GM10248 (cell line): ENCODE measurements at regions of chr3 and their contacts with region 1.

Region 1: GRCh38 chr3:49411968-49412631 is at the starts of genes RHOA and TCTA:
- DNase-seq: peak; percentile 99
- CTCF ChIP-seq: no peak

Region 2: GRCh38 chr3:49422379-49423248 is 10.5 kb after region 1 on chr3 and contains the start of gene AMT:
- CTCF ChIA-PET with region 1: interaction called, 11 read pairs
- POLR2A ChIA-PET with region 1: interaction called, 22 read pairs
- DNase-seq: no peak
- CTCF ChIP-seq: no peak

Region 3: DNA sequence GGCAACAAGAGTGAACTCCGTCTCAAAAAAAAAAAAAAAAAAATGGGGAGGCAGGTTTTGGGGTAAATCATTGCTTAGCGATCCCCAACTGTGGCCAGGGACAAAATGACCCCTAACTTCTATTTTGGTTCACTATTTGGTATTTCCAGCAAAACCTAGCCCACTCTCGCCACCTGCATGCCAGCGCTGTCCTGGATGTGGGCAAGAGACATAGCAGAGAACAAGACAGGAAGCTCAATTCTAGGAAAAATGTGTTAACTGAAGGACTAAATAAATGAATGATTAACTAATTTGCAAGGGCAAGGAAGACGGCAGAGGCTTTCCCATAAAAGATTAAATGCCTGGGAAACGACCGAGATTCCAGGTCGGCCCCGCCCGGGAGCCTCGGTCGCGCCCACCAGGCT is 16.6 kb after region 1 on chr3:
- CTCF ChIA-PET with region 1: interaction called, 6 read pairs
- POLR2A ChIA-PET with region 1: interaction called, 22 read pairs
- DNase-seq: no peak
- CTCF ChIP-seq: no peak

Region 4: GRCh38 chr3:49454458-49454857 is 42.4 kb after region 1 on chr3:
- CTCF ChIA-PET with region 1: interaction called, 17 read pairs
- POLR2A ChIA-PET with region 1: no interaction called
- DNase-seq: peak; percentile 12
- CTCF ChIP-seq: peak; percentile 36